Stomach (tissue), 19 donors: ENCODE measurements at regions of chr4 and their contacts with region 1.

Region 1: DNA sequence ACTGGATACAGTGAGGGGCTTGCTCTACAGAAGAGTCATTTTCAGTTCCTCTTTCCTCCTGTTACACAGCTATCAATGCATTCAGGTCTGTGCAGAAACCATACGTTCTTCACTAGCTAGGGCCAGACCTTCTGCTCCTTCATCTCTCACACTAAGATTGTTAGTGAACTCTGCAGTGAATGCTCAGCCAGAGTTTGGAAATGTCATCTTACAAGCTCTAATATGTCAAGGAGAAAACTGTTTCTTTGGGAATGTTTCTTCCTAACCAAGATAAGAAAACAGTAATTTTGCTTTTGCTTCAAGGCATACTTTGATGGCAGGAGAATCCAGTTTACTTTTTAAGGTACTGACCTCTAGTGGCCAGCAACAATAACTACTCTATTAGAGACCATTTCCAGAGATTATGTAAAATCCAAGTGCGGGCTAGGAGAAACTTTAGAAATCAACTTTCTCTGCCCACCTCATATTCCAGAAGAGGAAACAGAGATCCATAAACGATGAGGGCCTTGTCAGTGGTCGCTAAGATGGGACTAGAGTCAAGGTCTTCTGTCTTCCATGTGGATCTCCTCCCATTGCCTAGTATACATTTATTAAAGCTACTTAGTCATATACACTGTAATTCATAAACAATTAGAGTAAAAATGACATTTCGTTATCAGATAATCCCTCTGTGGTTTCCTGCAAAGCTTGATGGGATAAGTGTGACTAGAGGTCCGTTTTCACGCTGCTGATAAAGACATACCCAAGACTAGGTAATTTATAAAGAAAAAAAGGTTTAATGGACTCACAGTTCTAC is 12.1 kb upstream of the CC2D2A start:
- DNase-seq: peak in 1 of 2 donors; percentile 78
- H3K4me3 ChIP-seq: no peak overlapping the region
- H3K27ac ChIP-seq: peak overlapping the region in 3 of 5 donors; percentile 31 to 58 (median 43)
- H3K4me1 ChIP-seq: peaks cover 8 to 23% (median 16%) of the 10 kb centered on the region in 4 donors
- H3K27me3 ChIP-seq: no peaks in the 10 kb centered on the region
- CTCF ChIP-seq: peak in 5 of 7 experiments; percentile 37 to 78 (median 66)
- EP300 ChIP-seq: no peak
- POLR2A ChIP-seq: no peak

Region 2: GRCh38 chr4:15238720-15239119 is 218.9 kb before region 1 on chr4:
- intact Hi-C with region 1: loop called (anchors 5 kb)
- DNase-seq: peak in 1 of 2 donors; percentile 63
- H3K4me3 ChIP-seq: no peak overlapping the region
- H3K27ac ChIP-seq: no peak overlapping the region
- H3K4me1 ChIP-seq: peaks cover 0 to 24% (median 8%) of the 10 kb centered on the region in 4 donors
- H3K27me3 ChIP-seq: no peaks in the 10 kb centered on the region
- CTCF ChIP-seq: peak in 3 of 7 experiments; percentile 17 to 34 (median 27)
- EP300 ChIP-seq: no peak
- POLR2A ChIP-seq: no peak